Right ventricle myocardium inferior (tissue), 1 donor: ENCODE measurements at regions of chr11 and their contacts with region 1.

Region 1: DNA sequence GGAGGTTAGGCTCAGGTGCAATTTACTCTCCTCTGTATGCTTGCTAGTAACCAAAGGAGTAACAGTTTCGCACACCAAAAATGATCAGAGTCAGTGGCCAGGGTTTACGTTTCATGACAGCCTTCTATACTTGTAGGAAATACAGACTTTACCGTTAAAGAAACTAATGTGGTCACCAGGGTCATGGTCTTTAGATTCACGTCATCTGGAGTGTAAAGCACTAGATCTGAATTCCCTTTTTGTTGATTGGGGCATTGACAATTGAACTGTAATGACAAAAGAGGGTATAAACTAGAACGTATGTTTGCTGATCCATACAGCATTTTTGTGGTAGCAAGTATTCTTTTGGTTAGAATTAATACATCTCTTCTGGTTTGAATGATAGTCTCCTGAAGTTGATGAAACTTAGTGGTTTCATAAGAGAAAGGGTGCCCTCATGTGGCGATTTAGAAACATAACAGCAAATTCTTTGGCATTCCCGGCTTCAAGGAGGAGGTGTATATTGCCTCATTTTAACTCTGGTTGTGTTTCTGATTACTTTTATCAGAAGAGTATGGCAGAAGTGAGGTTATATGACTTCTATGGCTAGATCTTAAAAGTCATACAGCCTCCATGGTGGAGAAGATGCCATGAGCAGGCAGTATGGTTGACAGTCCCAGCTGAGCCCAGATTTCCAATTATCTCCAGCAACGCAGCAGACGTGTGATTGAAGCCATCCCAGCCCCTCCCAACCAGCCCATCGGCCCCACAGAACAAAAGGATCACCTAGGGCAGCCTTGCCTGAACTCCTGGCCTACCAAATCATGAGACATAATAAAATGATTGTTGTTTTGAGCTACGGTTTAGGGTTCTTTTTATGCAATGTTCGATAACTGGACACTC is 35.1 kb downstream of the MMP7 start:
- DNase-seq: no peak
- ATAC-seq: peak; percentile 64

Region 2: GRCh38 chr11:102287964-102288724 is 207.3 kb before region 1 on chr11:
- intact Hi-C with region 1: loop called (anchors 5 kb)
- DNase-seq: no peak
- ATAC-seq: peak; percentile 77

Region 3: GRCh38 chr11:102341844-102342318 is 153.5 kb before region 1 on chr11:
- intact Hi-C with region 1: loop called (anchors 1 kb)
- DNase-seq: no peak
- ATAC-seq: peak; percentile 59

Region 4: DNA sequence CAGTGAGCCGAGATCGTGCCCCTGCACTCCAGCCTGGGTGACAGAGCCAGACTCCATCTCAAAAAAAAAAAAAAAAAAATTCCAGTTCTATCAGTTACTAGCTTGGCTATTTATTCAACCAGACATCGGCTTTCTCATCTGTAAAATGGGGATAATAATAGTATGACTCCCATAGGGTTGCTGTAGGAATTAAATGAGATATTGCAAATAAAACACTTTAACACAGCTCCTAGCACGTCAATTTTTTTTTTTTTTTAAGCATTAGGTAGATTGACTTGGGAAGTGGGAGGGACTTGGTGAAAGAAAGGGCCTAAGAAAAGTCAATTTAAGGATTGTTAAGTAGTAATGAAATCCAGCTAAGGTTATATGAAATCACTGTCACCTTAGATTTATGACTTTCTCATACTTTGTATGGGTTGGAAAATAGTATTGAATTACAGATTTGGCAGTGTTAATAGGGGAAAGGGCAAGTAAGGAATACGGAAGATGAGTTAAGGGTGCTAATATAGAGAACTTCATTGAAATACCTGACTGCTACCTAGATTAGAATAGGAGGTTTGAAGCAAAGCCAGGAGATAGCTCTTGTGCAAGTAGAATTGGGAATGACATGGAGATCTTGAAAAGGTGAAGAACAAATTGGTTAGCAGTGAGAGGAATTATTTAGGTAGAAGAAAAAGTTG is 119.5 kb before region 1 on chr11:
- intact Hi-C with region 1: no loop called
- DNase-seq: no peak
- ATAC-seq: no peak

Region 5: GRCh38 chr11:102390667-102391465 is 104.5 kb before region 1 on chr11:
- intact Hi-C with region 1: loop called (anchors 1 kb)
- DNase-seq: peak; percentile 68
- ATAC-seq: peak; percentile 80

Region 6: GRCh38 chr11:102850973-102851745 is 355.8 kb after region 1 on chr11:
- intact Hi-C with region 1: no loop called
- DNase-seq: no peak
- ATAC-seq: no peak